OCI-LY7 (cell line): ENCODE measurements at regions of chr10 and their contacts with region 1.

Region 1: GRCh38 chr10:114795039-114795438 is 26.5 kb upstream of the FHIP2A start:
- DNase-seq: no peak
- H3K4me3 ChIP-seq: no peak overlapping the region
- H3K27ac ChIP-seq: no peak overlapping the region
- H3K4me1 ChIP-seq: no peaks in the 10 kb centered on the region
- CTCF ChIP-seq: no peak

Region 2: GRCh38 chr10:114458955-114459354 is 336.1 kb before region 1 on chr10:
- CTCF ChIA-PET with region 1: no interaction called
- POLR2A ChIA-PET with region 1: no interaction called
- intact Hi-C with region 1: loop called (anchors 5 kb)
- DNase-seq: peak; percentile 24
- H3K4me3 ChIP-seq: no peak overlapping the region
- H3K27ac ChIP-seq: no peak overlapping the region
- H3K4me1 ChIP-seq: no peaks in the 10 kb centered on the region
- CTCF ChIP-seq: peak; percentile 72

Region 3: DNA sequence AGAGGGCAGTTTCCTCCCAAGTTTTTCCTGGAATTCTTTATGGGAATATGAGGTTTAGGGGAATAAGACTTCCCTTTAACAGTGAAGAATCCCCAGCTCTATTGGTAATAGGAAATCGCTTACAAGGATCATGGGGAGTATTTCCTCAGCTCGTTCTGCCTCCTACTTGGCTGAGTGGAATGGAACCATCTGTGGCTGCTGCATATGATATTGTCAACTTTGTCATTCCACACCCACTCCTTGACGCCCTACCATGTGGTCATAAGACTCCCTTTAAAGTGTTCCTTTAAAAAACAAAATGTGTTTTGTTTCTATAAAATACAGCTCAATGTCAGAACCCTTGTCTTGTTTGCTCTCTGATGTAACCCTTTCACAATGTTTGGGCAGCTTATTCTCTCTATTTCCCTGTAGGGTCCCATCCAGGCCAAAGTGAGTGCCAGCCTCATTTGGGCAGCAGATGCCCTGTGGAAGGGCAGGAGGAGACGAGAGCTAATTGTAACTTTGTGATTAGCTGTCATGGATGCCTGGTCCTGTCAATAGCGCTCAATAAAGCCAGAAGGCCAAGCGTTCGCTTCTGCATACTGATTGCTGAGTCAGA is 264.4 kb after region 1 on chr10:
- CTCF ChIA-PET with region 1: no interaction called
- POLR2A ChIA-PET with region 1: no interaction called
- intact Hi-C with region 1: no loop called
- DNase-seq: no peak
- H3K4me3 ChIP-seq: no peak overlapping the region
- H3K27ac ChIP-seq: no peak overlapping the region
- H3K4me1 ChIP-seq: no peaks in the 10 kb centered on the region
- CTCF ChIP-seq: no peak